Head of caudate nucleus (tissue), 42 donors: ENCODE measurements at regions of chr6 and their contacts with region 1.

Region 1: GRCh38 chr6:39804466-39805065 is 12.4 kb downstream of the DAAM2 start:
- DNase-seq: peak in 2 of 42 donors; percentile 0 to 41

Region 2: GRCh38 chr6:39870950-39871349 is 66.4 kb after region 1 on chr6:
- intact Hi-C with region 1: loop called (anchors 10 kb)
- DNase-seq: peak in 1 of 42 donors; percentile 22